Activated CD4-positive, alpha-beta memory T cell treated with anti-CD3 and anti-CD28 coated beads for 36 hours (primary cell): ENCODE measurements at regions of chr3 and their contacts with region 1.

Region 1: DNA sequence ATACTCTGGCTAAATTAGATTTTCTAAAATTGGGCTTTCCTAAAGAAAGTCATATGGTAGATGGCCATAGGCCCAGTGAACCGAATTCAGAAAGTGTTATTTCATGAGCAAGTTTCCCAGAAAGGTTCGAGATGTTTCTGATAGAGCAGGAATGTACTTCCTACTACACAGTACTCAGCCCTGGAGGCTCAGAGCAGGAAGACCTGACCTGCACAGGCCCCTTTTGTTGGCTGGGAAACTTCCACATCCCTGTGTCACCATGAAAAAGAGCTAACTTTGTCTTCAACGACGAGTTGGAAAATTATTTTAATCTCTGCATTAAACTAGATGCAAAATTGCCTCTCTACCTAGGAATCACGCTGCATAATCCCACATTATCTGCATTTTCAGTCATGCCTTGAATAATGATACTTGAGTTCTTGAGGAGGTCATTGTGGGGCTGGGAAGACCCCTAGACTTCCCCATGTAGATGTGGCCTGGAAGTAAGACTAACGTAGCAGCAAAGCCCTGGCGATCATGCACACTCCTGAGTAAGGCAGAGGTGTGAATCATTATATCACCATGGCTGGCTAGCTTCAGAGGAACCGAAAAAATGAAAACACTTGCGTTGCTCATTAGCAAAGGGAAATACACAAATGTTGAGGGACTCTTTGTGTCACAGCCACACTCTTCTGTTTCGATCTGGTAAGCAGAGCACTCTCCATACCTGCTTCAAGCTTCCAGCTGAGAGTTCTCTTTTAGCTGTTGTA is 47.1 kb downstream of the CMTM7 start:
- DNase-seq: peak; percentile 63
- H3K4me3 Mint-ChIP-seq: peak overlapping the region; percentile 21
- H3K27ac Mint-ChIP-seq: peak overlapping the region; percentile 87
- H3K4me1 Mint-ChIP-seq: peaks cover 74% of the 10 kb centered on the region
- H3K27me3 Mint-ChIP-seq: no peaks in the 10 kb centered on the region

Region 2: GRCh38 chr3:32257639-32258038 is 181.1 kb before region 1 on chr3:
- CTCF ChIA-PET with region 1: no interaction called
- POLR2A ChIA-PET with region 1: no interaction called
- intact Hi-C with region 1: no loop called
- DNase-seq: peak; percentile 26
- H3K4me3 Mint-ChIP-seq: no peak overlapping the region
- H3K27ac Mint-ChIP-seq: no peak overlapping the region
- H3K4me1 Mint-ChIP-seq: peaks cover 22% of the 10 kb centered on the region
- H3K27me3 Mint-ChIP-seq: no peaks in the 10 kb centered on the region

Region 3: GRCh38 chr3:32420126-32421038 is 18.4 kb before region 1 on chr3:
- CTCF ChIA-PET with region 1: interaction called, 6 read pairs
- POLR2A ChIA-PET with region 1: interaction called, 29 read pairs
- intact Hi-C with region 1: loop called (anchors 2 kb)
- DNase-seq: peak; percentile 72
- H3K4me3 Mint-ChIP-seq: peak overlapping the region; percentile 38
- H3K27ac Mint-ChIP-seq: peak overlapping the region; percentile 91
- H3K4me1 Mint-ChIP-seq: peaks cover 89% of the 10 kb centered on the region
- H3K27me3 Mint-ChIP-seq: no peaks in the 10 kb centered on the region

Region 4: DNA sequence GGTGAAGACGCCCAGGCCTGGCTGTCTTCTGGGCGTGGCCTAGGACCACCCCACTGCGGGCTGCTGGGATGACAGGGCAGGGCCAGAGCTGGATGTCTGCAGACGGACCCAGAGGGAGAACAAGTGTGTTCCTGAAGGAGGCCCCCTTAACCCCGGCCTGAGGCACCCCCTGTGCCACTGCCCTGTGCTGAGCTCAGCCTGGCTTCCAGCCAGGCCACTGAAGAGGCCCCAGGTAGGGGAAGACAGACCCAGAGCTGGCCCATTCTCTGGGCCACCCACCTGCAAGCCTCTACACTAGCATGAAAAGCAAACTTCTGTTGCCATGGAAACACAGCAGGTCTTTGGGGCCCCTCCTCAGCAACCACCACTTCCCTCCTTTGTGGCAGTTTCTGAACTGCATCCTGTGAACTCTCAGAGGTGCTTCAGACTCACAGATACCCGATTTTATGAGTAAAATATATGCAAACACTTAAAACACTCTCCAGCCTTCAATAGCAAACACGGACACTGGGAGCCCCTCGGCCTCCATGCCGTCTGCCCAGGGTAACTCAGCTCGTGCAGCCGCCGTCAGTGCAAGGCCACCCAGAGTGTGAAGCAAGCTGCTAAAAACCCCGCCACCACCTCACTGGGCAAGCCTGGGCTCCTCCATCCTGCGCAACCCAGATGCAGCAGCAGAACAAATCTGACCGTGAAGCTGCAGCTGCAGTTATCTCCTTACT is 21.4 kb after region 1 on chr3:
- CTCF ChIA-PET with region 1: interaction called, 8 read pairs
- POLR2A ChIA-PET with region 1: interaction called, 5 read pairs
- intact Hi-C with region 1: loop called (anchors 1 kb)
- DNase-seq: peak; percentile 86
- H3K4me3 Mint-ChIP-seq: peak overlapping the region; percentile 63
- H3K27ac Mint-ChIP-seq: no peak overlapping the region
- H3K4me1 Mint-ChIP-seq: peaks cover 31% of the 10 kb centered on the region
- H3K27me3 Mint-ChIP-seq: no peaks in the 10 kb centered on the region